ENCODE measurements at regions of chr1 and their contacts with region 1.

Region 1: GRCh38 chr1:72086394-72086793 is 195.9 kb downstream of the NEGR1 start:
- DNase-seq: no peak
- H3K4me3 Mint-ChIP-seq: no peak overlapping the region
- H3K27ac Mint-ChIP-seq: no peak overlapping the region
- H3K4me1 Mint-ChIP-seq: no peaks in the 10 kb centered on the region
- H3K27me3 Mint-ChIP-seq: peaks cover 11% of the 10 kb centered on the region
- CTCF ChIP-seq: no peak

Region 2: GRCh38 chr1:72115290-72115689 is 28.9 kb after region 1 on chr1:
- CTCF ChIA-PET with region 1: no interaction called
- POLR2A ChIA-PET with region 1: no interaction called
- intact Hi-C with region 1: loop called (anchors 1 kb)
- DNase-seq: no peak
- H3K4me3 Mint-ChIP-seq: no peak overlapping the region
- H3K27ac Mint-ChIP-seq: no peak overlapping the region
- H3K4me1 Mint-ChIP-seq: no peaks in the 10 kb centered on the region
- H3K27me3 Mint-ChIP-seq: no peaks in the 10 kb centered on the region
- CTCF ChIP-seq: no peak

Measured in MCF 10A (cell line).